ENCODE measurements at regions of chr22 and their contacts with region 1.

Region 1: DNA sequence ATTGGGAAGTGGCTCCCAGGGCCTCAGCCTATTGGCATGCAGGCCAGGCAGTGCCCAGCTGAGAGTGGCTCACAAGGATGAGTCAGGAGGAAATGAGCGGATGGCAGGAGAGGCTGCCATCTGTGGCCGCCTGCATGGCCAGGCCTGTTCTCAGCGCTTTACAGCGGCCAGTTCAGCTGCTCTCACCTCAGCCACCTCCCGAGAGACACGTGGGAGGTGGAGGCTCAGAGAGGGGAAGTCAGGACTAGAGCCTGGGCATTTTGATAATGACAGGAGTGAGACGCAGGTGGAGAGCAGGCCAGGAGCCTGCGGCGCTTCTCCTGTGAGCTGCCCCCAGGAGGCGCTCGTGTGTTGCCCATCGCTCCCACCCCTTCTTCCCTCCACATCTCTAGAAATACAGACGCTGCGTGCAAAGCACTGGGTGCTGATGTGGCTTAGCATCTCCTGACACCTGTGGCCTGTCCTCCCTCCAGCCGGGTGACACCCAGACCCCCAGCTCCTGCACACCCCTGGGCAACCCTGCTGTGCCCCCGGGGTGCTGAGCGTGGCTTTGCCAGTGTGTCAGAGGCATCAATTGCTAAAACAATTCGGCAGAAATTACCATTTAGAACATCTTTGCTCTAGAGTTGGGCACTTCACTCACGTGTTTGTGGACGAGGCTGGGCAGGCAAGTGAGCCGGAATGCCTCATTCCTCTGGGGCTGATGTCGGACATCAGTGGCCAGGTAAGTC is 21.4 kb upstream of the PANX2 start:
- DNase-seq: peak; percentile 82
- ATAC-seq: peak; percentile 62

Region 2: GRCh38 chr22:50209893-50210292 is 60.7 kb after region 1 on chr22:
- intact Hi-C with region 1: loop called (anchors 2 kb)
- DNase-seq: no peak
- ATAC-seq: peak; percentile 32

Measured in Right ventricle myocardium inferior (tissue), 1 donor.